ENCODE measurements at regions of chr14 and their contacts with region 1.

Region 1: GRCh38 chr14:93051600-93052546 is 63.9 kb downstream of the ITPK1 start:
- DNase-seq: no peak
- H3K27ac ChIP-seq: peak overlapping the region; percentile 68
- CTCF ChIP-seq: no peak

Region 2: GRCh38 chr14:93173943-93174395 is 122.1 kb after region 1 on chr14:
- CTCF ChIA-PET with region 1: interaction called, 12 read pairs
- POLR2A ChIA-PET with region 1: no interaction called
- DNase-seq: no peak
- H3K27ac ChIP-seq: no peak overlapping the region
- CTCF ChIP-seq: no peak